Mammary epithelial cell (primary cell): ENCODE measurements at regions of chr12 and their contacts with region 1.

Region 1: DNA sequence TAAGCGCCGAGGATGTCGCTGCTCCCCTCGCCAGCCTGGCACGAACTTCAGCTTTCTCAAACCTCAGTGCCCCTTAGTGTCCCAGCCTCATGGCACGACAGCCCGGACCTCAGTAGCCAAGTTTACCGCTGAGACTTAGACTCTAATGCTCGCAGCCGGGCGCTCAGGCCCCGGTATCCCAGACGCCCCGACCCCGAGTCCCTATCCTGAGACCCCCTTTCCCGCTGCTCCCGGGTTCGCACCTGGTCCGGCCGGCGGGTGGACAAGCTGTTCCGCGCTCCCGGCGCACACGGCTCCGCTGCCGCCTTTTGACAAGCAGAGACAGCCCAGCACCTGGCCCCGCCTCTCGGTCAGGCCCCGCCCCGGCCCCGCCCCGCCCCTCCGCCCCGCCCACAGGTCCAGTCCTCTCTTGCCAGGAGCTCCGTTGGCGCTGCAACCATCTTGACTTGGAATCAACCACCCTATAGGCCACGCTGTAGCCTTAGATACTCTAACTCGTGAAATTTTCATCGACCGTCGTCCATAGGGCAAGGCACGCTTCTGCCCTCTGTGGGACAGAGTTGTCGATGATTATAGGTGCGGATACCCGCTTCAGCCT is at the start of gene VDR:
- DNase-seq: peak; percentile 83
- H3K4me3 ChIP-seq: peak within 1 kb of the TSS; percentile 69 to 84 (median 73)
- H3K27ac ChIP-seq: peak within 1 kb of the TSS; percentile 58
- H3K4me1 ChIP-seq: peaks cover 49% of the 10 kb centered on the region
- H3K27me3 ChIP-seq: no peaks in the 10 kb centered on the region
- CTCF ChIP-seq: peak; percentile 15 to 49
- total RNA-seq, gene VDR: 71.8 to 89.5 TPM

Region 2: GRCh38 chr12:47715393-47715876 is 189.4 kb before region 1 on chr12:
- CTCF ChIA-PET with region 1: no interaction called
- dilution Hi-C with region 1: no loop called
- in situ Hi-C with region 1: no loop called
- intact Hi-C with region 1: loop called (anchors 5 kb)
- DNase-seq: peak; percentile 77
- H3K4me3 ChIP-seq: peak overlapping the region in 1 of 3 experiments; percentile 9
- H3K27ac ChIP-seq: no peak overlapping the region
- H3K4me1 ChIP-seq: peaks cover 7% of the 10 kb centered on the region
- H3K27me3 ChIP-seq: no peaks in the 10 kb centered on the region
- CTCF ChIP-seq: peak; percentile 79 to 80

Region 3: DNA sequence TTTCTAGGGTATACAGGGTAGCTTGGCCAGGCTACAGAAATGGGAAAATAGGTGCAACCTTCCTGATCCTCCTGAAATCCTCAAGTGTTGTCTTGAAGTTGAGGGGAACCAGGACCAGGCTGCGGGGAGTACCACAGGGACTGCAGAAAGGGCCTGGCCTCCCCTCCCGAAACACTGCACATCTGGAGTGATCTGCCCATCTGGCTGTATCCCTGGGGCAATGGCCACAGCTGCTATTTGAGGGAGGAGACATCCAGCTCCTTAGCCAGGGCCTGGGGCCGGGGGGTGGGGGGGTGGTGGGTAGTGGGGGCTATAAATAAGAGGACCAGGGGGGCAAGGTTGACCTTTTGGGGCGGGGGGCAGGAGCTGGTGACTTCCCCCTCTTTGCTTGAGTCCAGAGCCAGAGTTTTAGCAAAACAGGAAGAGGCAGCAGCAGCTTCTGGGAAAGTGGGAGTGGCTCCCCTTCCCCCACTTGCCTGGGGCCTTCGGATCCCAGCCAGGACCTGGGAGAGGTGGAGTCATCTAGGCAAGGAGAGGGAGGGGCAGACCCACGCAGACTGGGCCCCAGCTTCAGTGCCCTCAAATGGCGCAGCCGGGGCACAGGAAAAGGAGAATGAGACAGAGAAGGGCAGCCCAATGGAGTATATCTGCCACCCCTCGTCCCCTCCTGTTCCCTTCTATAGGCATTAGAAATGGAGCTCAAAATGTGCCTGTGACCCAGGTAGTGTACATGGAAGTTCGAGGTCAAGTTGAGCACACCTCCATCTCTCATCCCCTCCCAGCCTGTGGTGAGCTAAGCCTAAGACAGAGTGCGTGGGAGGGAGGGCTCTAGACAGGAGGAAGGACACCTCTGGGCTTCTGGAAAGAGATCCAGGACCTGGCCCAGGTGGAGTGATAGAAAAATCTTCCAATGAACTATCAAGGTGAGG is 75.9 kb before region 1 on chr12:
- CTCF ChIA-PET with region 1: no interaction called
- dilution Hi-C with region 1: no loop called
- in situ Hi-C with region 1: no loop called
- intact Hi-C with region 1: no loop called
- DNase-seq: peak; percentile 79
- H3K4me3 ChIP-seq: no peak overlapping the region
- H3K27ac ChIP-seq: peak overlapping the region; percentile 33
- H3K4me1 ChIP-seq: peaks cover 42% of the 10 kb centered on the region
- H3K27me3 ChIP-seq: no peaks in the 10 kb centered on the region
- CTCF ChIP-seq: no peak

Region 4: DNA sequence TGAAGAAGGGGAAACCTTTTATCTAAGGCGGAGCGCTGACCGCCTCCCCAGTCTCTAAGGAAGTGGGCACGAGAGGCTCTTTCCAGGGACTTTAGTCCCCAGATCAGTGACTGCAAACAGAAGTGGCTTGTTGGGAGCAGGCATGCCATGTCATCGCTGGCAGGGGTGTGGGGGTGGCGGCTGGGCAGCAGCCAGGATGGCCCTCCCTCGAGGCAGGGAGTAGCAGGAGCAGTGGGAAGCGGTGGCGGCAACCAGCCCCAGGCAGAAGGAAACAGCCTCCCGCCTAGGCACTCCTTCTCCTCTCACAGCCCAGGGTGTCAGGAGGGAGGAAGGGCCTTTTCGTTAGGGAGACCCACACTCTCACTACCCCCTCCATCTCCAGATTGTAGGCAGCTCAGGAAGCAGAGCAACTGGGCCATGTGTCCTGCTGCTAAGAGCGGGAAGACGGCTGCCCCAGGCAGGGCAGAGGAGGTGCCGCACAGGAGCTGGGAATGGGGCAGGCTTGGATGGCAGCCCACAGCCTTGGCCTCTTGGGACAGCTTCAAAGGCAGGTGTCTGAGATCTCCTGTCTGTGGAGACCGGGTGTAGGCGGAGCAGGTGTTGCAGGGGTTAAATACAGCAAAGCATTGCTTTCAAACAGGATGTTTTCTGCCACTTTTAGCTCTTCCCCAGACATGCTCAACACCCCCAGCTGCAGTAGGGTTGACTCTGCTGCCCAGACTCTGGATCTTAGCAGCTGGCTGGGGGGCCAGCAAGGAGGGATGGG is 21.8 kb before region 1 on chr12:
- CTCF ChIA-PET with region 1: no interaction called
- dilution Hi-C with region 1: no loop called
- in situ Hi-C with region 1: no loop called
- intact Hi-C with region 1: loop called (anchors 1 kb)
- DNase-seq: peak; percentile 43
- H3K4me3 ChIP-seq: no peak overlapping the region
- H3K27ac ChIP-seq: peak overlapping the region; percentile 43
- H3K4me1 ChIP-seq: peaks cover 54% of the 10 kb centered on the region
- H3K27me3 ChIP-seq: no peaks in the 10 kb centered on the region
- CTCF ChIP-seq: no peak

Region 5: GRCh38 chr12:47949441-47950308 is 44.9 kb after region 1 on chr12:
- CTCF ChIA-PET with region 1: interaction called, 21 read pairs
- dilution Hi-C with region 1: no loop called
- in situ Hi-C with region 1: loop called in 1 of 2 experiments (anchors 5 kb)
- intact Hi-C with region 1: loop called (anchors 1 kb)
- DNase-seq: peak; percentile 78
- H3K4me3 ChIP-seq: no peak overlapping the region
- H3K27ac ChIP-seq: peak overlapping the region; percentile 78
- H3K4me1 ChIP-seq: peaks cover 84% of the 10 kb centered on the region
- H3K27me3 ChIP-seq: no peaks in the 10 kb centered on the region
- CTCF ChIP-seq: peak; percentile 81 to 96

Region 6: DNA sequence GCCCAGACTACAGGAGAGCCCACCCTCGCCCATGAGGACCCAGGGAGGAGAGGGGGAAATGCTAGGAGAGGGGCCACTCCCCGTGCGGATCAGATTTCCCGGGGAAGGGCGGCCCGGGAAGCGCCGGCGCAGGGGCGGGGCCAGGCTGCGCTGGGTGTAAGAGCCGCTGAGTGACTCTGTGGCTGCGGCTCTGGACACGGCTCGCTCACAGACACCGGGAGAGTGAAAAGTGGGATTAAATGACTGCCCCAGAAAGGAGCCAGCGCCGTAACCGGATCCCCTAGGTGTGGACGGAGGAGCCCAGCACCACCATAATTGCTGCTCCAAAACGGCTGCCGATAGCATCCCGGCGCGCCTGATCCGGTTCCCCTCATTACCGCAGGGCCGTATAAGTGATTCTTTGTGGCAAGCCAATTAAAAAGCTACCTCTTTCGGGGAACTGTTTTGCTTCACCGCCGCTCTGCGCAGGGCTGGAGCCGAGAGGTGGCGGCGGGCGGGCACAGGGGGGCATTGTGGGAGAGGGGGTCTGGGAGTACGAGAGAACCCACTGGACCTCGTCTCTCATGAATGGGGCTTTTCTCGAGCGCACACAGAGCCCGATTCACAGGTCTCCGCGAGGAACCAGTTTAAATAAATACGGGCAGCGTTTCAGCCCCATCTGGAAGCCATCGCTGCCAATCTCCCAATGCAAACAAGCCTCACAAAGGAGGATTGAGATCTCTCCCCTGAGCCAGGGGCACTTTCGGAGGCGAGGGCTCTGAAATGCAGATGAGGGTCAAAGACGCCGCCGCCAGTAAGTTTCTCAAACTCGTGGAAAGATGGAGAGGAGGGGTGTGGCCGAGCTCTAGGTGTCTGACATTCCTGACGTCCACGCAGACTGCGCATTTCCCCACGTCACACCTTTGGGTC is 96.9 kb after region 1 on chr12:
- CTCF ChIA-PET with region 1: no interaction called
- dilution Hi-C with region 1: no loop called
- in situ Hi-C with region 1: no loop called
- intact Hi-C with region 1: loop called (anchors 1 kb)
- DNase-seq: peak; percentile 64
- H3K4me3 ChIP-seq: peak overlapping the region; percentile 43 to 74 (median 54)
- H3K27ac ChIP-seq: peak overlapping the region; percentile 78
- H3K4me1 ChIP-seq: peaks cover 25% of the 10 kb centered on the region
- H3K27me3 ChIP-seq: peaks cover 12% of the 10 kb centered on the region
- CTCF ChIP-seq: no peak

Region 7: DNA sequence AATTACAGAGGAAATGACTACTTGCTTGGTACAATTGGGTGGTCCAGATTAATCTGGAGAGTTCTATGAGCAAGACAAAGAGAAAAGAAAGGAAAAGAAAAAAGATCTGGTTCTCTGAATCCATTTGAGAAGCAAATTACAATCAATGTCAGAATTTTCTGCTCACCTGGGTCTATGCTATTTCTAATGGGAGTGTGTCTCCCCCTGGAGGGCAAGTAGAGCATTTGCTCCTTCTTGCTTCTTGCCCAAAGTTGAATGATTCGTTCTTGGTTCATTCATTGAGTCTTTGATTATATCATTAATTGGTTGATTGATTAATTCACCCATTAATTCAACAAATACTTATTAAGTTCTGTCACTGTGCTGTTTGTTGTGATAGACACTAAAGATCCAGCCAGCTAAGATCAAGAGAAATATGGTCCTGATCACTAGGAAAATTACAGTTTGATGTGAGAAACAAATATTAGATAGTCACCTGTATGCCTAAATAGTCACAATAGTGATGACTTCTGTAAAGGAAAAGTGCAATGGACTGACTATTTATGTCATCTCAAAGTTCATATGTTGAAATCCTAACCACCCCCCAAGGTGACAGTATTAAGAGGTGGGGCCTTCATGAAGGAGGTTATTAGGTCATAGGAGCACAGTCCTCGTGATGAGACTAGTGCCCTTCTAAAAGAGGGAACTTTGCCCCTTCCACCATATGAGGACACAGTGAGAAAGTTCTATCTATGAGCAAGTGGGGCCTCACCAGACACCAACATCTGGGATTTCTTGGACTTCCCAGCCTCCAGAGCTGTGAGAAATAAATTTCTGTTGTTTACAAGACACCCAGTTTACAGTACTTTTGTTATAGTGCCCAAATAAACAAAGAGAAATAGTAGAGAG is 260.5 kb after region 1 on chr12:
- CTCF ChIA-PET with region 1: no interaction called
- dilution Hi-C with region 1: no loop called
- in situ Hi-C with region 1: no loop called
- intact Hi-C with region 1: loop called (anchors 1 kb)
- DNase-seq: peak; percentile 27
- H3K4me3 ChIP-seq: no peak overlapping the region
- H3K27ac ChIP-seq: no peak overlapping the region
- H3K4me1 ChIP-seq: no peaks in the 10 kb centered on the region
- H3K27me3 ChIP-seq: no peaks in the 10 kb centered on the region
- CTCF ChIP-seq: peak; percentile 95 to 98